ENCODE measurements at regions of chr22 and their contacts with region 1.

Region 1: DNA sequence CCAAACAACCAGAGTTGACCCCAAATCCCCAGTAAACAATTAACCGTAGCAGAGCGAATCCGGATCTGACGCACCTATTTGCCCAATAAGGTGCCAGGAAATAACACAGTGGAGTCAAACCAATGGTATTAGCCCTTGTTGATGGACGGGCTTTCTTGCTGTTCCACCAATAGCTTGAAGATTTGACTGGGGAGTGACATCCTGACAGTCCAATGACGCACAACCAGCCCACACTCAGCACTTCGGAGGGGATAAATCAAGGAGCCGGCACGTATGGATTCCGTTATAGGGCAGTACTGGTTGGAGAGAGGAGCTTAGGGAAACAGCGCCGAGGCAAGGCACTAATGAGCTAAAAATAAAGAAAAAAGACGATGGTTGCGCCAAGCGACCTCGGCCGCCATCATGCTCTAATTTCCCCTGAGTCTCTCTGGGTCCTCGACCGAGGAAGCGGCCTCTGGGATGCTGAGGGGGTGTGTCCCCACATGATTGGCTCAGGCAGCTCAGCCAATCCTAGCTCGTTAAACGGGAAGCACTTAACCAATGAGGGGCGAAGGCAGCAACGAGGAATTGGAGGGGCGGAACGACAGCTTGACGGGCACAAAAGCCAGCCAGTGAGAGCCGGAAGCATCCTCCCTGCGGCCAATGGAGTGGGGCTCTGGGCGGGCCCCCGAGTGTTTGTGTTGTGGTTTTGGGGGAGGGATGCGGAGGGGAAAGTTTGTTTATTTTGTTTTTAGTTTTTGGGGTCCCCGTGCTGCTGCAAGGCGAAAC is 49.5 kb downstream of the FAM83F start:
- DNase-seq: peak; percentile 98 to 99
- ATAC-seq: peak; percentile 95 to 96
- H3K4me3 ChIP-seq: peak overlapping the region; percentile 63
- H3K27ac ChIP-seq: peak overlapping the region; percentile 83 to 87
- H3K4me1 ChIP-seq: 0 out of 3 replicates have a peak, but pooled peaks cover 4% of the 10 kb centered on the region
- CTCF ChIP-seq: no peak
- EP300 ChIP-seq: no peak
- POLR2A ChIP-seq: peak; percentile 44; the same call in 1 of the 2 replicates
- RAD21 ChIP-seq: no peak

Region 2: GRCh38 chr22:39520054-39520891 is 524.0 kb before region 1 on chr22 and contains the start of gene ATF4:
- CTCF ChIA-PET with region 1: no interaction called
- POLR2A ChIA-PET with region 1: interaction called, 12 read pairs
- DNase-seq: peak; percentile 94 to 99
- ATAC-seq: peak; percentile 82 to 91
- H3K4me3 ChIP-seq: peak within 1 kb of the TSS; percentile 98
- H3K27ac ChIP-seq: peak within 1 kb of the TSS; percentile 96 to 99
- H3K4me1 ChIP-seq: peaks cover 25% of the 10 kb centered on the region
- CTCF ChIP-seq: no peak
- EP300 ChIP-seq: no peak
- POLR2A ChIP-seq: peak; percentile 87
- RAD21 ChIP-seq: no peak
- polyA plus RNA-seq, gene ATF4: 557 and 593 TPM in 2 replicates

Region 3: DNA sequence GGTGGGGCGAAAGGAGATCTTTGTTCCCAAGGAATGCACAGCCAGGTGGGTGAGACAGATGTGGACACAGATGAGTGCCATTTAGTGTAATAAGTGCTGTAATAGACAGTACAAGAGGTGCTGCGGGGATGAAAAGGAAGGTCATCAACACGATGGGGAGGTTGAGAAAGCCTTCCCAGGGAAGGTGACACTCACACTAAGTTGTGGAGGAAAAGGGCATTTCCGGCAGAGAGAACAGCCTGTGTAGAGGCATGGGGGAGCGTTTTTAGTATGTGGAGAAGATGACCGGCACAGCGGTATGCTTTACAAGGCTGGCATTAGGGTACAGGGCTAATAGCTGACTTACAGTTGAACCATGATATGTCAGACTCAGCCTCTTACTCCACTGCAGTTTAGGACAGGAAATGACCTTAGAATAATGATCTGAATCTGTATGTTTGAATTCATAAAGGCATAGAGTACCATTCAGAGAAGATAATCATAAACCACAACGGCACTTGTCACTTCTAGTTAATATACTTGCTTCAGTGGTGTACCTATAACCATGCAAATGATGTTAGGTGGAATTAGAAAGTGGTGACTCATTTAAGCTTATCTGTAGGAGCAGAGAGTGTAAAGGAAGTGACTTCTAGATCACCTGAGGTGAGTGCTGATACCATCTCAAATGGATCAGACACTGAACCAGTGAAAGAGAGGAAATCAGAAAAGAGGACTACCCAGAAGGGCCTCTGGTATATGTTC is 11.0 kb after region 1 on chr22:
- CTCF ChIA-PET with region 1: interaction called, 5 read pairs
- POLR2A ChIA-PET with region 1: interaction called, 11 read pairs
- DNase-seq: no peak
- ATAC-seq: no peak
- H3K4me3 ChIP-seq: no peak overlapping the region
- H3K27ac ChIP-seq: no peak overlapping the region
- H3K4me1 ChIP-seq: no peaks in the 10 kb centered on the region; the same call in 2 of the 3 replicates
- CTCF ChIP-seq: no peak
- EP300 ChIP-seq: no peak
- POLR2A ChIP-seq: no peak
- RAD21 ChIP-seq: no peak

Region 4: GRCh38 chr22:40177738-40178416 is 133.6 kb after region 1 on chr22 and contains the start of gene TNRC6B:
- CTCF ChIA-PET with region 1: interaction called, 3 read pairs
- POLR2A ChIA-PET with region 1: interaction called, 49 read pairs
- DNase-seq: peak; percentile 59 to 94
- ATAC-seq: peak; percentile 97 to 98
- H3K4me3 ChIP-seq: peak within 1 kb of the TSS; percentile 88
- H3K27ac ChIP-seq: peak within 1 kb of the TSS; percentile 94 to 97
- H3K4me1 ChIP-seq: peaks cover 44% of the 10 kb centered on the region
- CTCF ChIP-seq: no peak
- EP300 ChIP-seq: no peak
- POLR2A ChIP-seq: peak; percentile 54
- RAD21 ChIP-seq: no peak
- polyA plus RNA-seq, gene TNRC6B: 4.9 and 5.2 TPM in 2 replicates

Region 5: GRCh38 chr22:40346178-40347118 is 302.2 kb after region 1 on chr22 and contains the start of gene ADSL:
- CTCF ChIA-PET with region 1: interaction called, 10 read pairs
- POLR2A ChIA-PET with region 1: interaction called, 31 read pairs
- DNase-seq: peak; percentile 82
- ATAC-seq: peak; percentile 98
- H3K4me3 ChIP-seq: peak within 1 kb of the TSS; percentile 72
- H3K27ac ChIP-seq: peak within 1 kb of the TSS; percentile 87 to 97
- H3K4me1 ChIP-seq: peaks cover 20% of the 10 kb centered on the region
- CTCF ChIP-seq: no peak
- EP300 ChIP-seq: no peak
- POLR2A ChIP-seq: peak; percentile 95
- RAD21 ChIP-seq: no peak
- polyA plus RNA-seq, gene ADSL: 126 TPM in 2 replicates

Region 6: DNA sequence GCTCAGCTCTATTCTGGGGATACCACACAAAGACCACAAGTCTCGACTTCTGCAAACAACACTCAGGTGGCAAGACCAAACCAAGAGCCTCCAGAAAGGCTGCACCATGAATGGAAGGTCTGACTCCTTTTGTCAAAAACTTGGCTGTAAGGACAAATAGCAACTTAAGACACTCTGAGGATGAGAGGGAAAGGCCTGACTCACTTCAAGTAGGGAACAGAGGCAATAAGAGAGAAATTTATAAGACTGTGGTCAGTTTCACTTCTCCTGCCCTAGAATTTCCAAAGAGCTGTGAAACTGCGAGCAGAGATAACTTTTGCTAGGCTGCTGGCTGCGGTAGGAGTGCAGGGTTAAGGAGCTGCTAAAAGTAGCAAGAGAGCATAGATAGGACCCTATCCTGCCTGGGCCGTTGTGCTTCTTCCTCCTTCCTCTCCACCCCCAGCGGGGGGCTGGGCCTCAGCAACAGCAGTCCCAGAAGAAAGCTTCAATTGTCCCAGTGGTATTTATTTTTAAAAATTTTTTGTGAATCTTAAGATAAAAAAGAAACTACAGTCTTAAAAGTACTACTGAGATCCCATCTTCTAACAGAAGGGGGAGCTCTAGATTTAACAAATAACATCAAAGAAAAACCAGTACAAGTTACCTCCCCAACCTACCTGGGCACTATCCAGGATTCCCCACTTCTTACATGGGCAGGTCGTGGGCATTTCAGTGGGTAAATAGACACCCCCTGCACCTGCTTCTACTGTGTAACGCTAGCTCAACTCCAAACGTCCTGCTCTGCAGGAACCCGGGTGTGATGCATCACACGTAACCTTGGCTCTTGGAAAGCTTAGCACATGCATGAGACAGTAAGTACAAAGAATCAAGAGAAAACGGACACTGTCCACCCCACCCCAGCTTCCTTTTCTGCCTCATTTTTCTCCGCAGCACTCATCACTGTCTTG is 392.5 kb after region 1 on chr22:
- CTCF ChIA-PET with region 1: no interaction called
- POLR2A ChIA-PET with region 1: no interaction called
- DNase-seq: peak; percentile 29 to 70
- ATAC-seq: peak; percentile 74 to 79; a peak in 5 of 6 replicates
- H3K4me3 ChIP-seq: no peak overlapping the region
- H3K27ac ChIP-seq: peak overlapping the region; percentile 81 to 83
- H3K4me1 ChIP-seq: peaks cover 41% of the 10 kb centered on the region
- CTCF ChIP-seq: peak; percentile 68
- EP300 ChIP-seq: no peak
- POLR2A ChIP-seq: no peak
- RAD21 ChIP-seq: peak; percentile 57 to 75